Spleen (tissue), 13 donors: ENCODE measurements at regions of chr19 and their contacts with region 1.

Region 1: GRCh38 chr19:33430674-33431277 is 57.3 kb downstream of the CEBPG start:
- DNase-seq: peak; percentile 86
- H3K4me3 ChIP-seq: no peak overlapping the region
- H3K27ac ChIP-seq: peak overlapping the region in 3 of 8 donors; percentile 6 to 26 (median 20)
- H3K4me1 ChIP-seq: peaks cover 0 to 12% (median 3%) of the 10 kb centered on the region in 6 donors
- H3K27me3 ChIP-seq: no peaks in the 10 kb centered on the region
- CTCF ChIP-seq: peak; percentile 48 to 88 (median 70)
- POLR2A ChIP-seq: no peak

Region 2: GRCh38 chr19:33580026-33580644 is 149.4 kb after region 1 on chr19:
- intact Hi-C with region 1: no loop called
- DNase-seq: peak; percentile 52
- H3K4me3 ChIP-seq: no peak overlapping the region
- H3K27ac ChIP-seq: no peak overlapping the region
- H3K4me1 ChIP-seq: no peaks in the 10 kb centered on the region
- H3K27me3 ChIP-seq: peaks cover 0 to 43% (median 0%) of the 10 kb centered on the region in 7 donors
- CTCF ChIP-seq: no peak
- POLR2A ChIP-seq: no peak

Region 3: GRCh38 chr19:33771384-33772101 is 340.8 kb after region 1 on chr19:
- intact Hi-C with region 1: loop called (anchors 5 kb)
- DNase-seq: peak; percentile 87
- H3K4me3 ChIP-seq: no peak overlapping the region
- H3K27ac ChIP-seq: no peak overlapping the region
- H3K4me1 ChIP-seq: peaks cover 0 to 8% (median 0%) of the 10 kb centered on the region in 6 donors
- H3K27me3 ChIP-seq: peaks cover 0 to 40% (median 0%) of the 10 kb centered on the region in 7 donors
- CTCF ChIP-seq: peak; percentile 61 to 92 (median 80)
- POLR2A ChIP-seq: no peak